CD4-positive, alpha-beta memory T cell (primary cell): ENCODE measurements at regions of chr16 and their contacts with region 1.

Region 1: DNA sequence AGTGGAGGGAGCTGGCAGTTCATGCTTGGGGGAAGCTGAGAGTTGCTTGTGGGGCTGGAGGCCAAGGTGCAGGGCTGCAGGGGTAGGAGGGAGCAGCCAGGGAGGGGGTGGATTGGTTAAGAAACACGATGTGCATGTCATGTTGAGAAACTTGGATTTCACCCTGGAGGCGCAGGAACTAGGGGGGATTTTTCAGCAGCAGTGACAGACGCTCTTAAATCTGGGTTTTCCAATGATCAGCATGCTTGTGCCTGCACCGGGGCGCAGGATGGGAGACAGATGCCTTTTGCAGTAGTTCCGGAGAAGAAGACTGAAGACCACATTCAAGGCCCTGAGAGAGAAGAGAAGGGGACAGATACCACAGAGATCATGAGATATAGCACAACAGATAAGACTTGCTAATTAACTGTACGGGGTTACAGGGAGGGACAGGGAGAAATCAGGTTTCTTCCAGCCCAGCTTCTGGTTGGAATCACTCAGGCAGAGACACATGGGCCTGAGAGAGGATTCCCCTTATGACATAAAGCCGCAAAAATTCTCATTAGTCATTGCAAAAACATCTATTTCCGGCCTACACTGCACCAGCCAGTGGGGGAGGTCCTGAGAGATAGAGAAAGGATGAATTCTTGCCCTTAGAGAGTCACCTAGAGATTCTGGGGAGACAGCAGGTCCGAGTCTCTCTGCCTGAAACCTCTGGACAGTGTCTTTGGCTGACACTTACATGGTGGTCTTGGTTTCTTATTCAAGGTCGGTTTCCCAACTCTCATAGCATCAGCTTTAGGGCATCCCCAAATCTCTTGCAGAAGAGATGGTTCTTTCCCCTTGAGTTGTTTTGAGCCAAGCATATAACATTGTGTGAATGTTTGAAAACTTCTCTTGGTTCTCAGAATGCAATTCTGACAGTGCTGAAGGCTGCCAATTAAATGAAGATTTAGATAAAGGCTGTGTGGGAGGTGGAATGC is 27.1 kb downstream of the CDH13 start:
- DNase-seq: peak; percentile 58 to 83 (median 68)
- H3K4me3 ChIP-seq: no peak overlapping the region
- H3K4me3 Mint-ChIP-seq: peak overlapping the region; percentile 50 to 91 (median 69)
- H3K27ac ChIP-seq: peak overlapping the region; percentile 80
- H3K27ac Mint-ChIP-seq: peak overlapping the region; percentile 86 to 98 (median 96)
- H3K4me1 ChIP-seq: peaks cover 98% of the 10 kb centered on the region
- H3K4me1 Mint-ChIP-seq: peaks cover 82 to 99% (median 90%) of the 10 kb centered on the region in 4 donors
- H3K27me3 ChIP-seq: no peaks in the 10 kb centered on the region
- H3K27me3 Mint-ChIP-seq: no peaks in the 10 kb centered on the region

Region 2: DNA sequence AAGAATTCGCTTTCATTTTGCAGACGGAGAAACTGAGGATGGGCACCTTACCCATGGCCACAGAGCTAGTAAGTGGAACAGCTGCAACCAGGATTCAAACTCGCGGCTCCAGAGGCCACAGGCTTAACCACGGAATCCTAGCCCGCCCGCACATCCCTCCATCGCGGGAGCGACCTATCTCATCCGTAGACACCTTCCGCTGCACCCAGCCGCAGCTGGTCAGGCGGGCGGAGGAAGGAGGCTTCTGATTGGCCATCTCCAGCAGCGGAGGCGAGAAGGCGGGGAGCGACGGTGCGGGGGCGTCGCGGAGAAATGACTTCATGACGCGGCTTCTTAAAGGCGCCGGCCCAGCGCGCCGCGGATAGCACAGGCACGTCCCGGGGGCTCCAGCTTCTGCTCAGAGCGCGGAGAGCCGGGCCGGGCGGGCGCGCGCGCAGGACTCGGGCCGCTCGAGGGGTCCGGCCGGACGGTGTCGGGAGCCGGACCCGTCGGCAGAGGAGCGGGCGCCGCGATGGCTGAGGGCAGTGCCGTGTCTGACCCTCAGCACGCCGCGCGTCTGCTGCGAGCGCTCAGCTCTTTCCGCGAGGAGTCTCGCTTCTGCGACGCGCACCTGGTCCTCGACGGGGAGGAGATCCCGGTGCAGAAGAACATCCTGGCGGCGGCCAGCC is 1339.1 kb before region 1 on chr16 and contains the start of gene GAN:
- CTCF ChIA-PET with region 1: no interaction called
- POLR2A ChIA-PET with region 1: no interaction called
- intact Hi-C with region 1: loop called (anchors 10 kb)
- DNase-seq: peak; percentile 93 to 95 (median 94)
- H3K4me3 ChIP-seq: peak within 1 kb of the TSS; percentile 86 to 93
- H3K4me3 Mint-ChIP-seq: peak within 1 kb of the TSS; percentile 92 to 99 (median 97)
- H3K27ac ChIP-seq: peak within 1 kb of the TSS; percentile 33
- H3K27ac Mint-ChIP-seq: peak within 1 kb of the TSS; percentile 89 to 98 (median 94)
- H3K4me1 ChIP-seq: peaks cover 25% of the 10 kb centered on the region
- H3K4me1 Mint-ChIP-seq: peaks cover 33 to 53% (median 44%) of the 10 kb centered on the region in 4 donors
- H3K27me3 ChIP-seq: no peaks in the 10 kb centered on the region
- H3K27me3 Mint-ChIP-seq: no peaks in the 10 kb centered on the region
- total RNA-seq, gene GAN: 9.5 to 10.8 TPM

Region 3: GRCh38 chr16:82169861-82170845 is 483.7 kb before region 1 on chr16 and contains the start of gene MPHOSPH6:
- CTCF ChIA-PET with region 1: no interaction called
- POLR2A ChIA-PET with region 1: no interaction called
- intact Hi-C with region 1: loop called (anchors 1 kb)
- DNase-seq: peak; percentile 87 to 90 (median 88)
- H3K4me3 ChIP-seq: peak within 1 kb of the TSS; percentile 59 to 76
- H3K4me3 Mint-ChIP-seq: peak within 1 kb of the TSS; percentile 91 to 99 (median 96)
- H3K27ac ChIP-seq: peak within 1 kb of the TSS; percentile 76
- H3K27ac Mint-ChIP-seq: peak within 1 kb of the TSS; percentile 90 to 98 (median 95)
- H3K4me1 ChIP-seq: peaks cover 24% of the 10 kb centered on the region
- H3K4me1 Mint-ChIP-seq: peaks cover 15 to 35% (median 22%) of the 10 kb centered on the region in 4 donors
- H3K27me3 ChIP-seq: no peaks in the 10 kb centered on the region
- H3K27me3 Mint-ChIP-seq: peaks cover 14 to 18% of the 10 kb centered on the region in 2 donors
- total RNA-seq, gene MPHOSPH6: 19.6 to 22.8 TPM

Region 4: DNA sequence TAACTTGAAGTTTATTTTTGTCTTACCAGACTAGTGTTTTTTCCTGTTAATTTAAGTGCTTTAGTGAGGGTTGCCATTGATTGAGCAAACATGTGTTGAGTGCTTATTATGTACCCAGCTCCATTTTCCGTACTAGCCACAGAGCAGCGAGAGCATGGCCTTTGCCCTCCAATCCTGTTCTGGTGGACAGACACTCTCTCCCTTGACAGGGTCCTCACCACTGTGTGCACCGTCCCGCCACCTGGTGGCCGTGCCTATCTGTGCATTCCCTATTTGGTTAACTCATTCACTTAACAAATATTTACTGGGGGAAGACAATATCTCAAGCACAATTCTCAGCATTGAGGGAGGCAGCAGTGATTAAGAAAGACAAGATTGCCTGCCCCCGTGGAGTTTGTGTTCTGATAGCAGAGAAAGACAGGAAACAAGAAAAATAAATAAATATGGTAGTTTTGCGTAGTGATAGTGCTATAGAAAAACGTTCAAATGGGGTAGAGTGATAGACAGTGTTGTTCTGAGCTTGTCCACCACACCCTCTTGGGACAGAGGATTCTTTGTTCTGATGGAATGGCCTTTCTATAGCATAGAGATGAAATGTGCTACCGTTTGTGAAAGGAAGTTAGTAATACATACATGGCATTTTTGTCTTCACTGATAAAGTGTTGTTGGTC is 14.0 kb before region 1 on chr16:
- CTCF ChIA-PET with region 1: interaction called, 123 read pairs
- POLR2A ChIA-PET with region 1: interaction called, 41 read pairs
- intact Hi-C with region 1: loop called (anchors 1 kb)
- DNase-seq: peak in 3 of 5 donors; percentile 19 to 35 (median 29)
- H3K4me3 ChIP-seq: no peak overlapping the region
- H3K4me3 Mint-ChIP-seq: no peak overlapping the region
- H3K27ac ChIP-seq: no peak overlapping the region
- H3K27ac Mint-ChIP-seq: peak overlapping the region in 1 of 7 donors; percentile 5
- H3K4me1 ChIP-seq: peaks cover 5% of the 10 kb centered on the region
- H3K4me1 Mint-ChIP-seq: peaks cover 4 to 7% (median 5%) of the 10 kb centered on the region in 4 donors
- H3K27me3 ChIP-seq: no peaks in the 10 kb centered on the region
- H3K27me3 Mint-ChIP-seq: no peaks in the 10 kb centered on the region

Region 5: DNA sequence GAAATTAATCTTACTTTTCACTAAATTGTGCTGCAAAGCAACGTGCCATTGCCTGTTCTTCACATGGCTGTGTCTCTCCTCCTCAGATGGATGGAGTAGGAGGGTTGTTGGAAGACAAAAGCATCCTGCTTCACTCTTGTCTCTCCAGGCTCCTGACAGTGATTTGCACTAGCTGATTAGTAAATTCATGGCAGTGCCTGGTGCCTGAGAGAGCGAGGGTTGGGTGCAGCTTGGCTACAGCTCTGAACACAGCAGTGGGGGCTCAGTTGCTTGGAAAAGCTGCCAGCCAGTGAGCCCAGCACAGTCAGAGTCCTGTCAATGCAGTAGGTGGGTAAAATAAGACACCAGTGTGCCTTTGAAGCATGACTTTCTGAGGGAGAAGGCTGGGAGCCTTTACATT is 10.3 kb after region 1 on chr16:
- CTCF ChIA-PET with region 1: interaction called, 3 read pairs
- POLR2A ChIA-PET with region 1: interaction called, 23 read pairs
- intact Hi-C with region 1: no loop called
- DNase-seq: no peak
- H3K4me3 ChIP-seq: no peak overlapping the region
- H3K4me3 Mint-ChIP-seq: no peak overlapping the region
- H3K27ac ChIP-seq: no peak overlapping the region
- H3K27ac Mint-ChIP-seq: no peak overlapping the region
- H3K4me1 ChIP-seq: peaks cover 19% of the 10 kb centered on the region
- H3K4me1 Mint-ChIP-seq: peaks cover 14 to 23% (median 16%) of the 10 kb centered on the region in 4 donors
- H3K27me3 ChIP-seq: no peaks in the 10 kb centered on the region
- H3K27me3 Mint-ChIP-seq: no peaks in the 10 kb centered on the region

Region 6: DNA sequence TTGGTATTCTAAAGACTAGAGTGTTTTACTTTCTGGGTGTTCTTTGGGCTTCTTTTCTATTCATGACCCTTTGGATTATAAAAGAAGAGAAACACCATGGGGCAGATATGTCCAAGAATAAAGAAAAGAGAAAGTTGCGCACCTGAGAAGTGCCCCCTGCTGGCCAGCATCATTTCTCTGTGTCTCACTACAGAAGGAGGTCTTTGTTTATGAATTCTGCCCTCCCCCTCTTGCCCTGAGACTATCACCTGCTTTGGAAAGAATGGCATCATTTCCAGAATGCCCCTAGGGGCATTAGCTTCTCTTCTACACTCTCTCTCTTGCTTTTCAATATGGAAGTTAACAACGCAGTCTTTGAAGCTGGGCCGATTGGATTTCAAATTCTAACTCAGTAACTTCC is 17.9 kb after region 1 on chr16:
- CTCF ChIA-PET with region 1: interaction called, 48 read pairs
- POLR2A ChIA-PET with region 1: interaction called, 23 read pairs
- intact Hi-C with region 1: loop called (anchors 1 kb)
- DNase-seq: peak in 1 of 5 donors; percentile 19
- H3K4me3 ChIP-seq: no peak overlapping the region
- H3K4me3 Mint-ChIP-seq: no peak overlapping the region
- H3K27ac ChIP-seq: no peak overlapping the region
- H3K27ac Mint-ChIP-seq: no peak overlapping the region
- H3K4me1 ChIP-seq: no peaks in the 10 kb centered on the region
- H3K4me1 Mint-ChIP-seq: peaks cover 0 to 2% (median 0%) of the 10 kb centered on the region in 4 donors
- H3K27me3 ChIP-seq: no peaks in the 10 kb centered on the region
- H3K27me3 Mint-ChIP-seq: peaks cover 0 to 1% of the 10 kb centered on the region in 2 donors

Region 7: GRCh38 chr16:83807710-83808572 is 1154.1 kb after region 1 on chr16 and contains the start of gene HSBP1:
- CTCF ChIA-PET with region 1: no interaction called
- POLR2A ChIA-PET with region 1: no interaction called
- intact Hi-C with region 1: loop called (anchors 5 kb)
- DNase-seq: peak; percentile 91 to 92 (median 91)
- H3K4me3 ChIP-seq: peak within 1 kb of the TSS; percentile 76 to 89
- H3K4me3 Mint-ChIP-seq: peak within 1 kb of the TSS; percentile 97 to 99 (median 98)
- H3K27ac ChIP-seq: peak within 1 kb of the TSS; percentile 74
- H3K27ac Mint-ChIP-seq: peak within 1 kb of the TSS; percentile 86 to 98 (median 97)
- H3K4me1 ChIP-seq: peaks cover 35% of the 10 kb centered on the region
- H3K4me1 Mint-ChIP-seq: peaks cover 20 to 57% (median 33%) of the 10 kb centered on the region in 4 donors
- H3K27me3 ChIP-seq: no peaks in the 10 kb centered on the region
- H3K27me3 Mint-ChIP-seq: no peaks in the 10 kb centered on the region
- total RNA-seq, gene HSBP1: 30.7 to 34.3 TPM